BJ (cell line): ENCODE measurements at regions of chr21 and their contacts with region 1.

Region 1: DNA sequence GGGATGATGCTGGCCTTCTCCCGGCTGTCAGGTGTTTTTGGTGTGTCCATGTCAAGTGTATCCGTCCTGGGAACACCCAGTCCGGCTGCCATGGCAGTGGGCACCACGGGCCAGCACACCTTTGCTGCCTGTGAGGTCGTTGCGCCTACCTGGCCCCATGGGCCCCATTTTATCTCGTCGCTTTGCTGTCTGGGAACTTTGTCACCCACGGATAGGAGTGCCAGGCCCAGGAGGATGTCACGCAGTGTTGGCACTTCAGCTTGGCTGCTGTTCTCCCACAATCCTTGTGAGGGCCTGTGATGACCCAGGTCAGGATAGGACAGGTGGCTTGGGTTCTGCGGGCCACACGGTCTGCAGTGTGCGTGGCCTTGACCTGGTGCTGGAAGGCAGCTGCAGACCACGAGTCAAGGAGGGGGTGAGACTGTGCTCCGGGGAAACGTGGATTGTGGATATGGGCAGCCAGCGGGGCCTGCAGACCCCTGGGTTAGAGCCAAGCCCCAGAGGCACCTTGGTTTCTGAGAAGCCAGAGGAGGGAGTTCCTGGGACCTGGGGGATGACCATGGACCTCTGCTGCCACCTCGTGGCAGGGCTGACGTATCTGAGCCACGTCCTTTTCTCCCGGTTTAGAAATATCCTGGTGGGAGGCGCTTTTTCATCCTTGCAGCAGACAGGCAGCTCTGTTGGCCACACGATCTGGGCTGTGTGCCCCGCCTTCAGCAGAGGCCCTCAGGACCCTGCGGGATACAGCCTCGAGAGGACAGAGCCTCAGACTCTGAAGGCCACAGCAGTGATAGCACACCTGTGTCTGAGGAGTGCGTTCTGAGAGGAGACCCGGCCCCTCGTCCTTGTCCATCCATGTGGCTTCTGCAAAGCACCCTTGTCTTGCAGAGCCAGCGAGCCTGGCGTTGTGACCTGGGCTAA is 161.1 kb upstream of the COL6A1 start:
- DNase-seq: peak; percentile 19
- H3K4me3 ChIP-seq: no peak overlapping the region
- H3K27me3 ChIP-seq: peaks cover 14% of the 10 kb centered on the region
- CTCF ChIP-seq: peak; percentile 89

Region 2: DNA sequence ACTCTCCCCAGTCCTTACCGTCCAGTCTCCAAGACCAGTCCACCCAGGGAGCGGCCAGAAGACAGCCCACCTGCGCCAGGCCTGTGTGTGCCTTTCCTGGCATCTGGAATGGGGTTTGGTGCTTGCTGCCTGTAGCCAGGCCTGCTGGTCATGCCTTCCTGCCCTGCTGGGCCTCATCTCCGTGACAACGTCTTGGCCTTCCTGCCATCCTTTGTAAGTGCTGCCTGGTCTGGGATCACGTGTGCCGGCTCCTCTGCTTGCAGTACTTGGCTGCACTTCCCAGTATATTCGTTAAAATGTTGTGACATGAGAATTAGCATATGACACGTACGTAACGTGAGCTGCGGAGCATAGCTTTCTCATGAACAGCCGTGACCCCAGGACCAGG is 15.8 kb after region 1 on chr21:
- CTCF ChIA-PET with region 1: interaction called, 18 read pairs
- POLR2A ChIA-PET with region 1: no interaction called
- DNase-seq: no peak
- H3K4me3 ChIP-seq: no peak overlapping the region
- H3K27me3 ChIP-seq: peaks cover 2% of the 10 kb centered on the region
- CTCF ChIP-seq: no peak